Breast epithelium (tissue), 4 donors: ENCODE measurements at regions of chr4 and their contacts with region 1.

Region 1: GRCh38 chr4:184234155-184234554 is 16.5 kb upstream of the ENPP6 start:
- DNase-seq: no peak
- H3K4me3 ChIP-seq: no peak overlapping the region
- H3K27ac ChIP-seq: no peak overlapping the region
- H3K4me1 ChIP-seq: no peaks in the 10 kb centered on the region
- H3K27me3 ChIP-seq: no peaks in the 10 kb centered on the region
- CTCF ChIP-seq: no peak
- POLR2A ChIP-seq: no peak

Region 2: DNA sequence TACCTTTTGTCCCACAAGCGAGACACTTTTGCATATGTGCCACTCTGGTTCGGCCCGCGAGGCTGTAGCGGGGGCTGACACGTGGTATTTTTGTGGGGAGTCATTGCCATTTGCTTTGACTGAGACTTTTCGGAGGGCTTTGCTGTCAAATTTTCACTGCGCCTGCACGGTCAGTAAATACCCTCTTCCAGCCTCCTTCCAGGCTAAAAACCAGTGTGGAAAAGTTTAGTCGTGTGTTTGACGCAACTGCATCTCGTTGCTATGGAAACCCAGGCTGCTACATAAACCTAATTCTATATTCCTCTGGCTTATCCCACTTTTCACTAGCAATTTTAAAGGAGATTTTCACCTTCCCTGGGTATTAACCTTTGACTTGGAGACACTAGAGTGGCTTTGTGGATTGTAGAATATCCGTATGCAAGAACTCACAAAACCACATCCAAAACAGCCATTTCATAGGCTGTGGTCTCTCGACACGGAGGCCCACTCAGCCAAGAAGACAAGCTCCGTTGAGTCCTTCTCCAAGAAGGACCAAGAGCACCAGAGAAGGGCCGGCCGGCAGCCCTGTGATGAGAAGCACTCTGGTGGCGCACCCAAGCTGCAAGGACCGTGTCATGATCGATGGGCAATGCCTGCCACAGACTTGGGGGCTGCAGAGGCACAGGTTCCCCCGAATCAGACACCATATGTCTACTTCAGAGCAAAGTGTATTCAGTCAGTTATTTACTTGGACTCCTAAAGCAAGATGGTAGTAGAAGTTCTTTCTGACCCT is 21.9 kb after region 1 on chr4:
- intact Hi-C with region 1: loop called (anchors 2 kb)
- DNase-seq: no peak
- H3K4me3 ChIP-seq: no peak overlapping the region
- H3K27ac ChIP-seq: no peak overlapping the region
- H3K4me1 ChIP-seq: no peaks in the 10 kb centered on the region
- H3K27me3 ChIP-seq: no peaks in the 10 kb centered on the region
- CTCF ChIP-seq: no peak
- POLR2A ChIP-seq: no peak